Activated naive CD8-positive, alpha-beta T cell treated with anti-CD3 and anti-CD28 coated beads, Interleukin-2, amount 10 ng/mL, durations not matched to agents 7 days and 5 days (primary cell): ENCODE measurements at regions of chr20 and their contacts with region 1.

Region 1: GRCh38 chr20:57432874-57433491 is 41.8 kb downstream of the RBM38 start:
- DNase-seq: peak; percentile 77
- ATAC-seq: peak; percentile 88
- H3K4me3 Mint-ChIP-seq: peak overlapping the region; percentile 61
- H3K27ac Mint-ChIP-seq: peak overlapping the region; percentile 93
- H3K4me1 Mint-ChIP-seq: peaks cover 41% of the 10 kb centered on the region
- H3K27me3 Mint-ChIP-seq: peaks cover 1% of the 10 kb centered on the region

Region 2: DNA sequence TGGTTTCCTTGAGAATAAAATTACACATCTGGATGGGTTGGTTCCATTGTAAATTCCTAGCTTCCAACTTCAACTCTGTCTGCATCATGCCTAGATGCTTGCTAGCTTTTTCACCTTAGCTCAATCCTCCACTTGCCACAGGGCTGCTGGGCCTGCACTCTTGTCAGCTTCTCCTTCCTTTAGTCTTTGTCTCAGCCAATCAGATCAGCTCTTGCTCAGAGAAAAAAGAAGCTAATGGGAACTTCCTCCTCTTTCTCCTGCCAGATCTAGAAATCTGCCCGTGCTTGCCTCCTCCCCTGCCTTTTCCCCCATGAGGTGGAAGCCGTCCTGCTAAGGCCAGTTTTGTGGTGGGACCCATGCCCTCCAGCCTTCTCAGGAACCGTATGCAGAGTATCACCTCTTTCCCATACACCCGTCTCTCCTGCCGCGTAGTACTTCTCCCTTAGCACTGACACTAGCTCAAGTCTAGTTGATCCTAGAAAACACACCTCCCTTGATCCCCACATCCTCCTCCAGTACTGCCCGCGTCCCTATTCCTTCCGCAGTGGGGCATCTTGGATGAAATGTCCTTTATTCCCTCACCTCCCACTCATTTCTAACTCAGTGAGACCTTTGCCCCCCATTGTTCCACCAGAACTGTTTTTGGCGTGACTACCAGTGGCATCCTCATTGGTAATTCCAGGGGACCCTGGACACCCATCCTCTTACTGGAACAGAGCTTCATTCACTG is 63.2 kb before region 1 on chr20:
- POLR2A ChIA-PET with region 1: no interaction called
- DNase-seq: no peak
- ATAC-seq: no peak
- H3K4me3 Mint-ChIP-seq: no peak overlapping the region
- H3K27ac Mint-ChIP-seq: no peak overlapping the region
- H3K4me1 Mint-ChIP-seq: peaks cover 5% of the 10 kb centered on the region
- H3K27me3 Mint-ChIP-seq: no peaks in the 10 kb centered on the region

Region 3: GRCh38 chr20:57391074-57391554 is 41.9 kb before region 1 on chr20 and contains the start of gene RBM38:
- POLR2A ChIA-PET with region 1: interaction called, 78 read pairs
- DNase-seq: peak; percentile 86
- ATAC-seq: peak; percentile 47
- H3K4me3 Mint-ChIP-seq: peak within 1 kb of the TSS; percentile 89
- H3K27ac Mint-ChIP-seq: peak within 1 kb of the TSS; percentile 87
- H3K4me1 Mint-ChIP-seq: peaks cover 25% of the 10 kb centered on the region
- H3K27me3 Mint-ChIP-seq: no peaks in the 10 kb centered on the region
- total RNA-seq, gene RBM38: 60.9 to 62.8 TPM

Region 4: DNA sequence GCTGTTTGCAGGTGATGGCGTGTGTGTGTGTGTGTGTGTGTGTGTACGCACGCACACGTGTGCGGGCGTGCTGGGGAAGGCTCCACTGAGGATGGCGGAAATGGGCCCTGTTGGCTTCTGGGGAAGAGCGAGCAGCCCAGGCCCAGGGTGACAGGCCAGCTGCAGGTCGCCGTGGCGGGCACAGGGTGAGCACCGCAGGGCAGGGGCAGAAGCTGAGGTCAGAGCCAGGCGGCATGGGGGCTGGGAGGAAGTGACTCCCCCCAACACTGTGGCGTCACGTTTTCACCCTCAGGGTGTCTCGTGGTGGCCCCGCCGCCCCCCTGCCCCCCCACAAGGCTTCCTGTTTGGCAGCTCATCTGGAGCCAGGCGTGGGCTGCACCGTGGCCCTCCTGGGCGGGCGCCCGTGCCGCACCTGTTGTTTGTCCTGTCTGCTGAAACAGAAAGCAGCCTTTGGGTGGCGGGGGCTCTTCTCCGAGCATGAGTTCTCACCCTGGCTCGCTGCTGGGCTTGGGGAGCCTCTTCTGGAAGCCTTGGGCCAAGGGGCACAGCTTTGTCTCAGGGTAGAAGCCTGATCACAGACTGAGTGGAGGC is 34.7 kb before region 1 on chr20:
- POLR2A ChIA-PET with region 1: interaction called, 78 read pairs
- DNase-seq: peak; percentile 82
- ATAC-seq: peak; percentile 81
- H3K4me3 Mint-ChIP-seq: peak overlapping the region; percentile 83
- H3K27ac Mint-ChIP-seq: peak overlapping the region; percentile 84
- H3K4me1 Mint-ChIP-seq: peaks cover 53% of the 10 kb centered on the region
- H3K27me3 Mint-ChIP-seq: no peaks in the 10 kb centered on the region

Region 5: DNA sequence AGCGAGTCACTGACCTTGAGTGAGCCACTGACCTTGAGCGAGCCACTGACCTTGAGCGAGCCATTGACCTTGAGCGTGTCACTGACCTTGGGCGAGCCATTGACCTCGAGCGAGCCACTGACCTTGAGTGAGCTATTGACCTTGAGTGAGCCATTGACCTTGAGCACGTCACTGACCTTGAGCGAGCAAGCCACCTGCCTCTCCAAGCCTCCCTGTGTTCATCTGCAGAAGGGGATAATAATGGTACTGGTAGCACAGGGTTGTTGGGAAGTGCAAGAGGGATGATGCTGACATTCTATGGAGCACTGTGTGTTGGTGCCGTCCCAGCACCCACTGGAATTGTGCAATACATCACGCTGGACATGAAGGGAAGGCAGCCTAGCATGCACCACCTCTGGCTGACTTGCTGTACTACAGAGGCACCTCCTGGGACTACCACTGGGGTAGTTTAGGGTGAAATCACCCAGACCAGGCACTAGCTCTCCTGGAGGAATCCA is 31.8 kb after region 1 on chr20:
- POLR2A ChIA-PET with region 1: no interaction called
- DNase-seq: no peak
- ATAC-seq: no peak
- H3K4me3 Mint-ChIP-seq: no peak overlapping the region
- H3K27ac Mint-ChIP-seq: no peak overlapping the region
- H3K4me1 Mint-ChIP-seq: no peaks in the 10 kb centered on the region
- H3K27me3 Mint-ChIP-seq: peaks cover 2% of the 10 kb centered on the region

Region 6: DNA sequence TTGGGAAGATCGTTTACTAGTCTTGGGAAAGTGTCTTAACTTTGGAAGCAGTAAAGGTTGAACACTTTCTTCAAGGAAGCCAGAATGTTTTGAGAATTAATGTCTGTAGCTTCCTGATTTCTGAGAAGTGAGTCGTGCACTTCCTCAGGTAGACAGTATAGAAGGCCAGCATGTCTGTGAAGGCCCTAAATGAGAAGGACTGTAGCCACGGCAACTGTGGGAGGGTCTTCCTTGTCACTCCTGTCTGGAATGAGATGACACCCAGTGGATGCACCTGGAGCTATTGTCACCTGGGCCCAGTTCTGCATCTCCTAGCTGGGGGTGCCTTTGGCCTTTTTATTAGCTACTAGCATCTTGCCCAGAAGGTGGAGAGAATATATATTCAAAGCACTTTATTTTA is 1226.9 kb after region 1 on chr20:
- POLR2A ChIA-PET with region 1: interaction called, 10 read pairs
- DNase-seq: no peak
- ATAC-seq: peak; percentile 56
- H3K4me3 Mint-ChIP-seq: peak overlapping the region; percentile 75
- H3K27ac Mint-ChIP-seq: peak overlapping the region; percentile 79
- H3K4me1 Mint-ChIP-seq: peaks cover 65% of the 10 kb centered on the region
- H3K27me3 Mint-ChIP-seq: no peaks in the 10 kb centered on the region